ENCODE measurements at regions of chr1 and their contacts with region 1.

Region 1: DNA sequence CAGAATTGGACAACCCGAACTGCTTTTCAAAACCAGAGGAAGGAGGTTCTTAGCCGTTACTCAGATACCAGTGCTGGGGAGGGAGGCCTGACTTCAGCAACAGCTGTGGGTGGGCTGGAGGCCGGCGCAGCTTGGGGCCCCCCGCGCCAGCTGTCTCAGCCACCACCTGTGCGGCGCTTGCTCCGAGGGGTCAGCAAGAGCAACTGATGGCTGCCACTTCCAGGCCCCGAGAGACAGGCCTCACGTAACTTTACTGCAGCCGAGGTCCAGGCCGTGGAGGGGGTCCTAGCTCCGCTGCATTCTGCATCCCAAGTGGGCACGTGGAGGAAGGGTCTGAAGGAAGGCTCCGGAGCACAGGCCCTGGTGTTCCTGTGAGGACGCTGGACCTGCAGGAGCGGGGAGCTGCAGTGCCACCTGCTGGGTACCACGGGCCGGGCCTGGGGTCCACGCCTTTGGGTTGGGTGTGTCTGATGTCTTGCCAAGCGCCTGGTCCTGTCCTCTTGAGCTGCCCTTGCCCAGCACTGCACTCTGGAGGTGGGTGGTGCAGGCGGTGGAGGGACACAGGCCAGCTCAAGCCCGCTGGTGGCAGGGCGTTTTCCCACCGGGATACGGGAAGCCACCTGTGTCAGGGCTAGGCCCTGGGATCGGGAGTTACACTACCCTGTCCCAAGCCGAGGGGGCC is 9.8 kb downstream of the THAP3 start:
- DNase-seq: peak; percentile 66
- H3K4me3 ChIP-seq: no peak overlapping the region
- H3K27ac ChIP-seq: no peak overlapping the region
- H3K4me1 ChIP-seq: peaks cover 7% of the 10 kb centered on the region
- H3K27me3 ChIP-seq: no peaks in the 10 kb centered on the region
- CTCF ChIP-seq: peak; percentile 30 to 37 (median 30)
- POLR2A ChIP-seq: no peak

Region 2: GRCh38 chr1:6579374-6580118 is 55.0 kb before region 1 on chr1 and contains the start of gene ZBTB48:
- intact Hi-C with region 1: loop called (anchors 5 kb)
- DNase-seq: peak; percentile 99
- H3K4me3 ChIP-seq: peak within 1 kb of the TSS; percentile 68 to 96
- H3K27ac ChIP-seq: peak within 1 kb of the TSS; percentile 83 to 94
- H3K4me1 ChIP-seq: peaks cover 30% of the 10 kb centered on the region
- H3K27me3 ChIP-seq: no peaks in the 10 kb centered on the region
- CTCF ChIP-seq: no peak
- POLR2A ChIP-seq: peak; percentile 85
- total RNA-seq, gene ZBTB48: 58.9 to 70.7 TPM

Measured in testis (tissue), 5 donors.